PC-9 (cell line): ENCODE measurements at regions of chr3 and their contacts with region 1.

Region 1: DNA sequence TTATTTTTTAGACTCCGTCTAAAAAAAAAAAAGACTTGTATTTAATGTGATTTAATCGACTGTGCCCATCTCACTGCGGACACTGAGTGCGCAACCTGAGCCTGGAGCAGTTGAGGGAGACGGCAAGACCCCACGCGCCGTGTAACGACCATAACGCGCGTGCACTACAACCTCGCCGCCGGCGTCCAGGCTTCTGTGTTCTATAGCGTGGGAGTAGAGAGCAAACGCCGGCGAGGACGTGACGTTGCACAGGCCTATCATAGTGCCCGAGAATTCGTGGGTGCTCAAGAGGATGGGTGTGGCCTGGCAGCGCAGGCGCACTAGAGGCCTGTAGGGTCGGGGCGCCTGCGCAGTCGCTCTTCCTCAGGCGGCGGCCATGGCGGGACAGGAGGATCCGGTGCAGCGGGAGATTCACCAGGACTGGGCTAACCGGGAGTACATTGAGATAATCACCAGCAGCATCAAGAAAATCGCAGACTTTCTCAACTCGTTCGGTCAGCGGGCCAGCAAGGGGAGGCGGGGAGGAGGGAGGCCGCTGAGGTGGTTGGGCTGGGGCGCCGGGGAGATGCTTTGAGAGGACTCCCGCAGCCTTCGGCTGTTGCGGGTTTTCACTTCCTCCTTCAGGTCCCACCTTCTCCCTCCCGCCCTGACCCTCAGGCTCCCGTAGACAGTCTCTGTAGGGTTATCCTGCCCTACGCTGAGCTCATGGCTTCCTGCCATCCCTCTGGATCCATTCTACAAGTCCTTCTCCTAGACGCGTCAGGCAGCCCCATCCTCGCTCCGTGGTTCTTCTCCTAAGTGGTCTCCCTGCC is at the start of gene BRK1:
- DNase-seq: peak; percentile 76 to 84
- H3K4me3 ChIP-seq: peak within 1 kb of the TSS; percentile 75
- H3K27ac ChIP-seq: peak within 1 kb of the TSS; percentile 41; the same call in 1 of the 2 replicates
- H3K4me1 ChIP-seq: peaks cover 8% of the 10 kb centered on the region
- H3K27me3 ChIP-seq: no peaks in the 10 kb centered on the region
- CTCF ChIP-seq: no peak
- total RNA-seq, gene BRK1: 73.8 and 109 TPM in 2 replicates

Region 2: DNA sequence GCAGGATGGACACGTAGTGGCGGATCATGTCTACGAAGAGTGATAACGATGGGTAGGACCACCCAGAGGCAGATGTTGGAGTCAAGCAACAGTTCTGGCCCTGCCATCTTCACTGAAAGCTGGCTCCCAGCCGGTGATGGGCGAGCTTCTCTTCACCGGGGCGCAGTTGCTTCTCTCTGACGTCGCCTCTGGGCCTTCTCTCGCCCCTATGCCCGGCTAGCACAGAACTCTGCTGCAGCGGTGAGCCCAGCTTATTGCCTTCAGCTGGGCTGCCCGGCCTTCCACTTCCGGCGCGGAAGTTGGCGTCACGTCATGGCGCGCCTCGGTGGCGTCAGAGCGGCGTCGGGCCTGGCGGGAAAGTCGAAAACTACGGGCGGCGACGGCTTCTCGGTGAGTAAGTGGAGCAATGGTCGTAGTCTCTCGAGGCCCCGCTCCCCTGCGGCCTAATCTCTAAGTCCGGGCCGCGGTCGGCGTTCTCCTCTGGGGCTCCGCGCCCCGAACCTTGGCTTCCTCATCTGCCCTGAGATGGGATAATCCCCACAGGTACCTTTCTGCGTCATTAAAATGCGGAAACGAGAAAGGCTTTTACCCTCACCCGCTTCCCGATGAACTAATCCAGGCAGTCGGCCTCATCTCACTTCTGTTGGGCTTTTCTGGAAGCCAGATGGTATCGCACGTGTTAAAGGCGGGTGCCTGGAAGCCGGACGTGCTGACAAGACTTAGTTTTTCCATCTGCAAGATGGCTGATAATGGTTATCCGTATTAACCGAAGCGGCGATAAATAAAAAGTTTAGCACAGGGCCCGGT is 89.2 kb before region 1 on chr3 and contains the start of gene FANCD2:
- CTCF ChIA-PET with region 1: no interaction called
- POLR2A ChIA-PET with region 1: interaction called, 16 read pairs
- intact Hi-C with region 1: no loop called
- DNase-seq: peak; percentile 65 to 86
- H3K4me3 ChIP-seq: peak within 1 kb of the TSS; percentile 75
- H3K27ac ChIP-seq: peak within 1 kb of the TSS; percentile 54
- H3K4me1 ChIP-seq: peaks cover 29% of the 10 kb centered on the region
- H3K27me3 ChIP-seq: no peaks in the 10 kb centered on the region
- CTCF ChIP-seq: no peak
- total RNA-seq, gene FANCD2: 35.7 and 52.2 TPM in 2 replicates

Region 3: DNA sequence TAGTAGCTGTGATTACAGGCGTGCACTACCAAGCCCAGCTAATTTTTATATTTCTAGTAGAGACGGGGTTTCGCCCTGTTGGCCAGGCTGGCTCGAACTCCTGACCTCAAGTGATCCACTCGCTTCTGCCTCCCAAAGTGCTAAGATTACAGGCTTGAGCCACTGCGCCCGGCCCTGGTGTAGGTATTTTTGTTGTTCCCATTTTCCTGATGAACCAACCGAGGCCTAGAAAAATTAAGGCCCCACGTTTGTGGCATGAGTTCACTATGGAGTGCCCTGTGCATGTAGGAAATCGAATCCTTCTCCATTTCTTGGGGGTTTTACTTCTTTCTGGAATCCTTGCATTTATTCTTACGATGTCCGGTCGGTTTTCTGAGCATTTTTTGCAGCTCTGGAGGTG is 118.5 kb after region 1 on chr3:
- CTCF ChIA-PET with region 1: no interaction called
- POLR2A ChIA-PET with region 1: interaction called, 10 read pairs
- intact Hi-C with region 1: no loop called
- DNase-seq: no peak
- H3K4me3 ChIP-seq: no peak overlapping the region
- H3K27ac ChIP-seq: no peak overlapping the region
- H3K4me1 ChIP-seq: no peaks in the 10 kb centered on the region
- H3K27me3 ChIP-seq: no peaks in the 10 kb centered on the region
- CTCF ChIP-seq: no peak